ENCODE measurements at regions of chr6 and their contacts with region 1.

Region 1: DNA sequence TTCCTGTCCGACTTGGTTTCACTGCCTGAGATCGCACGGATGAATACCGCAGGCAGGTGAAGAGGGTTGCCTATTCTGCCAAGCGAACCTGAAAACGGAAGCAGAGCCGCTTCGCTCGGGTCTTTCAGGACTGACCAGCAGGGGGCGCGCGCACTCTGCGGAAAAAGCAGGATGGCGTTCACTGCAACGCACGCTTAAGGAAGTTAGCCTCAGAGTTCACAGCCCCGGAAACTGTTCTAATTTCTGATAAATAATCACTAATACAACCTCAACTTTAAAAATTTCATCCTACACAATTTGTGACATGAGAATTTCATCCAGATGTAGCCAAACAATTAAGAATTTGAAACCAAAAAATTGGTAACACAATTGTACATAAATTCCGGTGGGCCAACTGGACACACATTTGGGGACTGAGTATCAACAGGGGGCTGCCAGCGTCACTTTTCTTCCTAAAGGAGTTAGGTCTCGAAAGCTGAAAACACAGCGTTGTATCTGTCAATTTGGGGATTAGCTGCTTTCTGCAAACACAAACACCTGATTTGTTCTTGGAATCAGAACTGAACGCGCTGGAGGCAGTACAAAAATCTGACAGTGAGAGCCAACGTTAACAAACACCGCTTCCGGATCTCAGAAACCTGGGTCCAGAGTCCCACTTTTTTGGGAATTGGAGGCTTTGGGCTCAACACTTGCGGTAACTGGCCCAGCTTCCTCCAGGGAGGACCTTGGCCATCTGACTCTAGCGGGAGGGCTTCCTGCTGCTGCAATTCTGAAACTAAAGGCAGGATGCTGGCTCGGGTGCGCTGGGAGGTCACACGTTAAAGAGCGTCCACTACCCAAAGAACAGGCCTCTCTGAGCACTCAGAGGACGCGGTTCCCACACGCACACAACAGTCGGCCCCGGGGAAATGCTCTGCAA is 8.8 kb downstream of the PXDC1 start:
- DNase-seq: peak; percentile 72
- ATAC-seq: peak; percentile 59
- H3K4me3 ChIP-seq: no peak overlapping the region
- H3K27ac ChIP-seq: no peak overlapping the region
- H3K4me1 ChIP-seq: peaks cover 39% of the 10 kb centered on the region
- H3K27me3 ChIP-seq: no peaks in the 10 kb centered on the region
- CTCF ChIP-seq: peak; percentile 89
- POLR2A ChIP-seq: no peak
- RAD21 ChIP-seq: peak; percentile 93

Region 2: DNA sequence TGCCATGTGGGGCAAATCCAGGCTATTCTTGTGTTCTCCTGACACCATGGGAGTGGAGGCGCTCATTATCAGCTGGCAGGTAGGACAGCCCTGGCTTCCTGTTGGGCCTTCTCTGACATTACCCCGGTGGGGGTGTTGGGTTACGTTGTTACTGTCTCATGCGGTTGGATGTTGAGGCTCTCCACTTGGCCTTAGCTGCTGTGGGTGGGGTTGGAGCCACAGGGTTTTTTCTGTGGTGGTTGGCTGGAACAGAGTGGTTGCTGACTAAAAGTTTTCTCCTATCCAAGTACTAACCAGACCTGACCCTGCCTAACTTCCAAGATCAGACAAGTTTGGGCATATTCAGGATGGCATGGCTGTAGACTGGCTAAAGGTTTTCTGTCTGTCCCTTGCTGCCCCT is 654.2 kb before region 1 on chr6:
- CTCF ChIA-PET with region 1: no interaction called
- POLR2A ChIA-PET with region 1: no interaction called
- dilution Hi-C with region 1: no loop called
- in situ Hi-C with region 1: no loop called
- intact Hi-C with region 1: no loop called
- DNase-seq: peak; percentile 11
- ATAC-seq: peak; percentile 70
- H3K4me3 ChIP-seq: no peak overlapping the region
- H3K27ac ChIP-seq: peak overlapping the region; percentile 97; the same call in 1 of the 2 replicates
- H3K4me1 ChIP-seq: peaks cover 10% of the 10 kb centered on the region
- H3K27me3 ChIP-seq: no peaks in the 10 kb centered on the region
- CTCF ChIP-seq: no peak
- POLR2A ChIP-seq: no peak
- RAD21 ChIP-seq: no peak

Region 3: GRCh38 chr6:3697609-3698008 is 45.1 kb before region 1 on chr6:
- CTCF ChIA-PET with region 1: no interaction called
- POLR2A ChIA-PET with region 1: no interaction called
- dilution Hi-C with region 1: no loop called
- in situ Hi-C with region 1: no loop called
- intact Hi-C with region 1: no loop called
- DNase-seq: peak; percentile 92
- ATAC-seq: peak; percentile 95
- H3K4me3 ChIP-seq: no peak overlapping the region
- H3K27ac ChIP-seq: no peak overlapping the region
- H3K4me1 ChIP-seq: peaks cover 10% of the 10 kb centered on the region
- H3K27me3 ChIP-seq: peaks cover 6% of the 10 kb centered on the region
- CTCF ChIP-seq: no peak
- POLR2A ChIP-seq: no peak
- RAD21 ChIP-seq: no peak

Region 4: DNA sequence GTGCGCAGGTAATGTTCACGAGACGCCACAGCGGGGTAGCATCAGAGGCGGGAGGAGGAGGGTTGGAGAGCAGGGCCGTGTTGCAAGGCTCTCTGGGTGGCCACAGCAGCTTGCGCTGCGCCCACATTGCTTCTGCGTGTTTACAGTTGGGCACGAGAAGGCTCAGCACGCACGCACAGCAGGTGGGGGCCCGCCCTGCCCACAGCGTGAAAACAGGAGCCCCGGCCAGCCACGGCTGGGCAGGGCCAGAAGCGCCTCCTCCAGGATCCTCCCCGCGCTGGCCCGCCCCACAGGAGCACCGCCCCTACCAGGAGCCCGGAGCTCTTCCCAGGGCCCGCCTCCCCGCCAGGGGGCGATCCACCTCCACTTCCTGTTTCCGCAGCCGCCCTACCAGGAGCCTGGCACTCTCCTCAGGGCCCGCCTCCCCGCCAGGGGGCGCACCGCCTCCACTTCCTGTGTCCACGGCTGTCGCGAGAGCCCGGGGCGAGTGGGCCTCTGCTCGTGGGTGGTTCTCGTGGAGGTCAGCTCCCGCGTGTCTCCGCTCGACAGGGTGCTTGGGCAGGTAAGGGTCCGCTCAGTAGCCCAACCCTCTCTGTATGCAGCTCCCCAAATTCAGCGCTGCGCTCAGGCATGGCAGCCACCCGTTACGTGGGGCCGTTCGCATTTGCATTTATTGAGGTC is 106.4 kb after region 1 on chr6 and contains the start of gene FAM50B:
- CTCF ChIA-PET with region 1: interaction called, 12 read pairs
- POLR2A ChIA-PET with region 1: no interaction called
- dilution Hi-C with region 1: no loop called
- in situ Hi-C with region 1: loop called (anchors 5 kb)
- intact Hi-C with region 1: loop called (anchors 1 kb)
- DNase-seq: peak; percentile 80
- ATAC-seq: peak; percentile 96
- H3K4me3 ChIP-seq: peak within 1 kb of the TSS; percentile 65
- H3K27ac ChIP-seq: peak within 1 kb of the TSS; percentile 69
- H3K4me1 ChIP-seq: peaks cover 8% of the 10 kb centered on the region; the same call in 1 of the 2 replicates
- H3K27me3 ChIP-seq: no peaks in the 10 kb centered on the region
- CTCF ChIP-seq: peak; percentile 99
- POLR2A ChIP-seq: no peak
- RAD21 ChIP-seq: peak; percentile 86
- total RNA-seq, gene FAM50B: 3.9 and 4.1 TPM in 2 replicates

Region 5: DNA sequence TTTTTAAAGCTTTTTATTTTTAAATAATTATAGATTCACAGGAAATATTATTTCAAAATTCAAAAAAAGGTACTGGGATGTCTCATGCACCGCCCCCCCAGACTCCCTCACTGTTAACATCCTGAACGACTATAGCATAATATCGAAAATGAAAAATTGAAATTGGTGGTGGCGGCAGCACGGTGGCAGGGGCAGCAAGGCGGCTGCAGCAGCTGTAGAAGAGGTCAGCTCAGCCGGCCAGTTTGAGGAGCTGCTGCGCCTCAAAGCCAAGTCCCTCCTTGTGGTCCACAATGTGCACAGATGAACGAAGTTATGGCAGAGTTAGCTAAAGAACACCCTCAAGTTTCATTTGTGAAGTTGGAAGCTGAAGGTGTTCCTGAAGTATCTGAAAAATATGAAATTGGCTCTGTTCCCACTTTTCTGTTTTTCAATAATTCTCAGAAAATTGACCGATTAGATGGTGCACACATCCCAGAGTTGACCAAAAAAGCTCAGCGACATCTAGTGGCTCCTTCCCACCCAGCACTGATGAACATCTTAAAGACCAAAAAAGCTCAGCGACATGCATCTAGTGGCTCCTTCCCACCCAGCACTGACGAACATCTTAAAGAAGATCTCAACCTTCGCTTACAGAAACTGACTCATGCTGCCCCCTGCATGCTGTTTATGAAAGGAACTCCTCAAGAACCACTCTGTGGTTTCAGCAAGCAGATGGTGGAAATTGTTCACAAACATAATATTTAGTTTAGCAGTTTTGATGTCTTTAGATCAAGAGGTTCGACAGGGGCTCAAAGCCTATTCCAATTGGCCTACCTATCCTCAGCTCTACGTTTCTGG is 235.4 kb after region 1 on chr6:
- CTCF ChIA-PET with region 1: interaction called, 12 read pairs
- POLR2A ChIA-PET with region 1: no interaction called
- dilution Hi-C with region 1: no loop called
- in situ Hi-C with region 1: loop called (anchors 5 kb)
- intact Hi-C with region 1: loop called (anchors 1 kb)
- DNase-seq: peak; percentile 96
- ATAC-seq: peak; percentile 97
- H3K4me3 ChIP-seq: no peak overlapping the region
- H3K27ac ChIP-seq: no peak overlapping the region
- H3K4me1 ChIP-seq: peaks cover 4% of the 10 kb centered on the region
- H3K27me3 ChIP-seq: no peaks in the 10 kb centered on the region
- CTCF ChIP-seq: peak; percentile 85
- POLR2A ChIP-seq: no peak
- RAD21 ChIP-seq: peak; percentile 77

Region 6: DNA sequence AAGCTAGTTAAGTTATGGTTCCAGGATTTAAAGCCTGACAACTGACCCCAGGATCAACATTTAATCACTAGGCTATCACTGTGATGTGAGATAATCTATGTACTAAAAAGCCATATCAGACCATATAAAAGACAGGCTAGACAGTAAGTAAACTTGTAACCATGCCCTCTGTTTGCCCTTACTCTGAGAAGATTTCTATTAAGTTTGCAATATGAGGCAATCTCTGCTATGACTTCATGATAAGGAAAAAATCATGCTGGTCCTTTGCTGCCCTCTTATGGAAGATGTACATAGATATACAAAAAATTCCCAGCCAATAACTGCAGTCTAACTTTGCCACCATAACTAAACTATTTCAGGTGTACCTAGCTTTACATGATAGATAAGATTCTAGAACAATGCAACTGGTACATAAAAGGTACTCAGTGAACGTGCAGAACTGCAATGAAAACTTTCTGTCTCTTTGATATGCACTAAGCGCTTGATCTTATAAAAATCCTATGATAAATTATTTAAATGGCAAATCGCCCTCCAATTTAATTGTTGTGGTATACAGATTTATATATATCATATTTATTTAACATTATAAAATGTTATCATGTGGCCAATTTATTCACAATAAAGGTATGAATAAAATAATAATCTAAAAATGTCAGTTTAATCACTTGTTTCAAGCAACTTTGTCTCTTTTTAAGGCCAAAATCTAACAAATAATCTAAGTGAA is 265.8 kb after region 1 on chr6:
- CTCF ChIA-PET with region 1: no interaction called
- POLR2A ChIA-PET with region 1: no interaction called
- dilution Hi-C with region 1: no loop called
- in situ Hi-C with region 1: no loop called
- intact Hi-C with region 1: loop called (anchors 1 kb)
- DNase-seq: peak; percentile 92
- ATAC-seq: peak; percentile 87
- H3K4me3 ChIP-seq: no peak overlapping the region
- H3K27ac ChIP-seq: no peak overlapping the region
- H3K4me1 ChIP-seq: no peaks in the 10 kb centered on the region
- H3K27me3 ChIP-seq: no peaks in the 10 kb centered on the region
- CTCF ChIP-seq: peak; percentile 84
- POLR2A ChIP-seq: no peak
- RAD21 ChIP-seq: peak; percentile 84

Measured in IMR-90 (cell line).